CD4-positive, alpha-beta T cell (primary cell): ENCODE measurements at regions of chr1 and their contacts with region 1.

Region 1: GRCh38 chr1:159798893-159799292 is 3.3 kb upstream of the FCRL6 start:
- DNase-seq: peak; percentile 11 to 77 (median 29)
- ATAC-seq: peak; percentile 59
- H3K4me3 ChIP-seq: no peak overlapping the region
- H3K4me3 Mint-ChIP-seq: no peak overlapping the region
- H3K27ac ChIP-seq: no peak overlapping the region
- H3K27ac Mint-ChIP-seq: no peak overlapping the region
- H3K4me1 ChIP-seq: peaks cover 32% of the 10 kb centered on the region
- H3K4me1 Mint-ChIP-seq: peaks cover 16% of the 10 kb centered on the region
- H3K27me3 ChIP-seq: peaks cover 0 to 3% of the 10 kb centered on the region in 2 experiments
- H3K27me3 Mint-ChIP-seq: peaks cover 3% of the 10 kb centered on the region
- CTCF ChIP-seq: peak; percentile 73

Region 2: GRCh38 chr1:159945483-159946241 is 146.8 kb after region 1 on chr1 and contains the start of gene IGSF9:
- CTCF ChIA-PET with region 1: interaction called, 25 read pairs
- POLR2A ChIA-PET with region 1: no interaction called
- intact Hi-C with region 1: loop called (anchors 1 to 5 kb)
- DNase-seq: peak; percentile 53 to 89 (median 72)
- ATAC-seq: peak; percentile 97
- H3K4me3 ChIP-seq: peak within 1 kb of the TSS; percentile 46
- H3K4me3 Mint-ChIP-seq: peak within 1 kb of the TSS; percentile 62
- H3K27ac ChIP-seq: no peak within 1 kb of the TSS
- H3K27ac Mint-ChIP-seq: no peak within 1 kb of the TSS
- H3K4me1 ChIP-seq: peaks cover 15% of the 10 kb centered on the region
- H3K4me1 Mint-ChIP-seq: peaks cover 10% of the 10 kb centered on the region
- H3K27me3 ChIP-seq: peaks cover 22 to 26% of the 10 kb centered on the region in 2 experiments
- H3K27me3 Mint-ChIP-seq: peaks cover 42% of the 10 kb centered on the region
- CTCF ChIP-seq: peak; percentile 63
- total RNA-seq, gene IGSF9: not detected

Region 3: GRCh38 chr1:160376525-160377131 is 577.7 kb after region 1 on chr1:
- CTCF ChIA-PET with region 1: no interaction called
- POLR2A ChIA-PET with region 1: no interaction called
- intact Hi-C with region 1: loop called in 1 of 2 experiments (anchors 10 kb)
- DNase-seq: peak in 4 of 14 experiments; percentile 37 to 74 (median 69)
- ATAC-seq: peak; percentile 80
- H3K4me3 ChIP-seq: no peak overlapping the region
- H3K4me3 Mint-ChIP-seq: no peak overlapping the region
- H3K27ac ChIP-seq: no peak overlapping the region
- H3K27ac Mint-ChIP-seq: no peak overlapping the region
- H3K4me1 ChIP-seq: peaks cover 12% of the 10 kb centered on the region
- H3K4me1 Mint-ChIP-seq: peaks cover 13% of the 10 kb centered on the region
- H3K27me3 ChIP-seq: no peaks in the 10 kb centered on the region
- H3K27me3 Mint-ChIP-seq: no peaks in the 10 kb centered on the region
- CTCF ChIP-seq: peak; percentile 87